ENCODE measurements at regions of chr2 and their contacts with region 1.

Region 1: GRCh38 chr2:145994910-145995309 is 1475.0 kb upstream of the ZEB2 start:
- DNase-seq: no peak
- ATAC-seq: no peak
- H3K4me3 ChIP-seq: no peak overlapping the region
- H3K27ac ChIP-seq: no peak overlapping the region
- H3K4me1 ChIP-seq: no peaks in the 10 kb centered on the region
- H3K27me3 ChIP-seq: no peaks in the 10 kb centered on the region
- CTCF ChIP-seq: no peak
- POLR2A ChIP-seq: no peak
- RAD21 ChIP-seq: no peak

Region 2: DNA sequence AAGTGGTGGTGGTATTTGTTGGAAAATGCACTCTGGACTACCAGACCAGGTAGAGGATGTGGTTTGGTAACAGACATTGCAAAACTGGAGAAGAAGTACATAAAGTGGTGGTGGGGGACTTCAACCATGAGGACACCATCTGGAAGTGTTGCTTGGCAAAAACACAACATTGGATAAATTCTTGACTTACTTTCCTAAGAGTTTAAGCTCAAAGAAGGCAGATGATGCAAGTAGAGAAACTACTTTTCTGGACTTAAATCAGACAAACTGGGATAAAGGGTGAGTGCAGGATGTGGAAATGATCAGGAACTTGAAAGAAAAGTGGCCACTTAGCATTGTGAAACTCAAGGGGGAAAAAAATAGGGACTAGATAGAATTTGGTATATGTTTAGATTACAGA is 1962.3 kb before region 1 on chr2:
- CTCF ChIA-PET with region 1: no interaction called
- POLR2A ChIA-PET with region 1: no interaction called
- dilution Hi-C with region 1: no loop called
- in situ Hi-C with region 1: no loop called
- intact Hi-C with region 1: no loop called
- DNase-seq: peak; percentile 28
- ATAC-seq: no peak
- H3K4me3 ChIP-seq: no peak overlapping the region
- H3K27ac ChIP-seq: no peak overlapping the region
- H3K4me1 ChIP-seq: no peaks in the 10 kb centered on the region
- H3K27me3 ChIP-seq: no peaks in the 10 kb centered on the region
- CTCF ChIP-seq: no peak
- POLR2A ChIP-seq: no peak
- RAD21 ChIP-seq: no peak

Region 3: GRCh38 chr2:146124741-146125140 is 129.8 kb after region 1 on chr2:
- CTCF ChIA-PET with region 1: no interaction called
- POLR2A ChIA-PET with region 1: no interaction called
- dilution Hi-C with region 1: no loop called
- in situ Hi-C with region 1: no loop called
- intact Hi-C with region 1: loop called (anchors 5 kb)
- DNase-seq: peak; percentile 63
- ATAC-seq: no peak
- H3K4me3 ChIP-seq: no peak overlapping the region
- H3K27ac ChIP-seq: no peak overlapping the region
- H3K4me1 ChIP-seq: no peaks in the 10 kb centered on the region; the same call in 1 of the 2 replicates
- H3K27me3 ChIP-seq: no peaks in the 10 kb centered on the region
- CTCF ChIP-seq: no peak
- POLR2A ChIP-seq: no peak
- RAD21 ChIP-seq: no peak